CD14-positive monocyte (primary cell): ENCODE measurements at regions of chr11 and their contacts with region 1.

Region 1: GRCh38 chr11:83071567-83072349 is at the start of gene RAB30:
- DNase-seq: peak; percentile 97 to 99 (median 99)
- H3K4me3 ChIP-seq: peak within 1 kb of the TSS; percentile 47 to 85 (median 80)
- H3K4me3 Mint-ChIP-seq: no peak within 1 kb of the TSS
- H3K27ac ChIP-seq: peak within 1 kb of the TSS; percentile 79 to 92
- H3K27ac Mint-ChIP-seq: no peak within 1 kb of the TSS
- H3K4me1 ChIP-seq: peaks cover 21 to 34% of the 10 kb centered on the region in 2 donors
- H3K4me1 Mint-ChIP-seq: peaks cover 3% of the 10 kb centered on the region
- H3K27me3 ChIP-seq: peaks cover 29 to 35% of the 10 kb centered on the region in 2 donors
- H3K27me3 Mint-ChIP-seq: peaks cover 0 to 11% (median 0%) of the 10 kb centered on the region in 3 donors
- CTCF ChIP-seq: no peak
- polyA plus RNA-seq, gene RAB30: 0.11 to 0.67 (median 0.54) TPM

Region 2: DNA sequence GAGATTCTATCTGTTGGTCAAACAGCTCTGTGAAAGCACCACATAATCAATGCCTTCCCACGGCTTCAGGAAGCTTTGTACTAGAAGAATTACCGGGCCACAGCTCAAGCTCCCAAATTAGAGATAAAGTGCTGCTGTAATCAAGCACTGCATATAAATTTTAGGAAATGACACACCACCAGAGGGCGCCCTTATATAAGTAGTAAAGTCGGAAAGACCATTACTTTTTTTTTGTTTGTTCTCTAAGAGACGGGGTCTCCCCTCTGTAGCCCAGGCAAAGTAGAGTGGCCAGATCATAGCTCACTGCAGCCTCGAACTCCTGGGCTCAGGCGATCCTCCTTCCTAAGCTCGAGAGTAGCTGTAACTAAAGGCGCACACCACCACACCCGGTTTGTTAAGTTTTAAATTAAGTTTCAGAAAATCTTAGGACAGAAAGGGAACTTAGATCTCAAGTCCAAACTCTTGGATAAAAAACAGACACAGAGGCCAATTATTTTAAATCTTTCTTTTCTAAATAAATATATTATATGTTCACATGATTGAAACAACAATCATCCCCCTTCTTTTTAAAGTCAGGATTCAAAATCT is 204.2 kb before region 1 on chr11:
- intact Hi-C with region 1: loop called in 1 of 2 experiments (anchors 10 kb)
- DNase-seq: peak; percentile 68 to 86 (median 78)
- H3K4me3 ChIP-seq: peak overlapping the region; percentile 25 to 80 (median 71)
- H3K4me3 Mint-ChIP-seq: peak overlapping the region; percentile 78 to 90
- H3K27ac ChIP-seq: peak overlapping the region in 1 of 2 donors; percentile 73
- H3K27ac Mint-ChIP-seq: peak overlapping the region; percentile 57 to 94 (median 82)
- H3K4me1 ChIP-seq: peaks cover 26 to 35% of the 10 kb centered on the region in 2 donors
- H3K4me1 Mint-ChIP-seq: peaks cover 36% of the 10 kb centered on the region
- H3K27me3 ChIP-seq: no peaks in the 10 kb centered on the region
- H3K27me3 Mint-ChIP-seq: no peaks in the 10 kb centered on the region
- CTCF ChIP-seq: peak; percentile 86

Region 3: DNA sequence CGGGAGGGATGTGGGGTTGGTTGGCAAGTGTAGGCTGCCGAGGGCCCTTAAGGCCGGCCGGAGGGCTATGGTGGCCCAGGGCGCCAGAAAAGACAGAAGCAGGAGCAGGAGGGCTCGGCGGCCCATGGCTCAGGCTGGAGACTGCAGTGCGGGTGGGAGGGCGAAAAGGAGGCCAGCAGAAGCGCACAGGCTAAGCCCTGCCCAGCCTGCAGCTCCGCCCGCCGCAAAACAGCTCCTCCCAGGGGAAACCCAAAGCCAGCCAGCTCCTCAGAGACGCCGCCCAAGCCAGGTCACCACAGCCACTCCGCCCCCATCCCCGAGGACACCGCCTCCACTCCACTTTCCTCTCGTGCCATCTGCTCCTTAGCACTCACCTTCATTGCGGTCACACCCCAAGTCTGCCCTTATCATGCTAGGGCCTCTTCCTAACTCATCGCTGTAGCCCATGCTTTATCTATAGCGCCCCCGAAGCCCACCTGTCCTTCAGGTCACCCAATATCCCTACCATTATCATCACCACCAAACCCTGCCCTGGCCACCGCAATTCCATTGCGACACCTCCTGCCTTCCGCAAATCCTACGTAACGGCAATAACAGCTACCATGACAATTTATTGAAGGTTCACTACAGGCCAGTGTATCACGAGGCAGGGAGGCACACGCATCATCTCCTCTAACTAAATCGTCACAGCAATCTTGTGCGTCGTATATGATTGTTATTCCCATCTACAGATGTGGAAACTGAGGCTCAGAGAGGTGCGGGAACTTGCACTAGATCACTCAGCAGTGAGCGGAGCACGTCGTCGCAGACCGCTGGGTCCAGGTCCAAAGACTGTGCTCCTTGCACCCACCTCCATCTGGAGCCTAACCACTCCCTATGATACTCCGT is 171.2 kb before region 1 on chr11 and contains the start of gene PRCP:
- intact Hi-C with region 1: loop called in 1 of 2 experiments (anchors 10 kb)
- DNase-seq: peak; percentile 89 to 98 (median 96)
- H3K4me3 ChIP-seq: peak within 1 kb of the TSS; percentile 76 to 89 (median 78)
- H3K4me3 Mint-ChIP-seq: peak within 1 kb of the TSS; percentile 99 to 100
- H3K27ac ChIP-seq: peak within 1 kb of the TSS; percentile 99
- H3K27ac Mint-ChIP-seq: peak within 1 kb of the TSS; percentile 100
- H3K4me1 ChIP-seq: peaks cover 57 to 62% of the 10 kb centered on the region in 2 donors
- H3K4me1 Mint-ChIP-seq: peaks cover 49% of the 10 kb centered on the region
- H3K27me3 ChIP-seq: no peaks in the 10 kb centered on the region
- H3K27me3 Mint-ChIP-seq: peaks cover 0 to 2% (median 0%) of the 10 kb centered on the region in 3 donors
- CTCF ChIP-seq: no peak
- polyA plus RNA-seq, gene PRCP: 68.0 to 228 (median 186) TPM

Region 4: GRCh38 chr11:83025267-83025720 is 46.5 kb before region 1 on chr11:
- intact Hi-C with region 1: no loop called
- DNase-seq: no peak
- H3K4me3 ChIP-seq: no peak overlapping the region
- H3K4me3 Mint-ChIP-seq: no peak overlapping the region
- H3K27ac ChIP-seq: no peak overlapping the region
- H3K27ac Mint-ChIP-seq: no peak overlapping the region
- H3K4me1 ChIP-seq: no peaks in the 10 kb centered on the region
- H3K4me1 Mint-ChIP-seq: no peaks in the 10 kb centered on the region
- H3K27me3 ChIP-seq: no peaks in the 10 kb centered on the region
- H3K27me3 Mint-ChIP-seq: peaks cover 0 to 2% (median 2%) of the 10 kb centered on the region in 3 donors
- CTCF ChIP-seq: no peak

Region 5: GRCh38 chr11:83156150-83156995 is 84.6 kb after region 1 on chr11:
- intact Hi-C with region 1: loop called (anchors 2 to 5 kb)
- DNase-seq: peak; percentile 100
- H3K4me3 ChIP-seq: peak overlapping the region; percentile 77 to 98 (median 91)
- H3K4me3 Mint-ChIP-seq: peak overlapping the region; percentile 98 to 99
- H3K27ac ChIP-seq: peak overlapping the region; percentile 95 to 97
- H3K27ac Mint-ChIP-seq: peak overlapping the region; percentile 90 to 100 (median 100)
- H3K4me1 ChIP-seq: peaks cover 25 to 40% of the 10 kb centered on the region in 2 donors
- H3K4me1 Mint-ChIP-seq: peaks cover 24% of the 10 kb centered on the region
- H3K27me3 ChIP-seq: no peaks in the 10 kb centered on the region
- H3K27me3 Mint-ChIP-seq: peaks cover 0 to 4% (median 0%) of the 10 kb centered on the region in 3 donors
- CTCF ChIP-seq: no peak

Region 6: DNA sequence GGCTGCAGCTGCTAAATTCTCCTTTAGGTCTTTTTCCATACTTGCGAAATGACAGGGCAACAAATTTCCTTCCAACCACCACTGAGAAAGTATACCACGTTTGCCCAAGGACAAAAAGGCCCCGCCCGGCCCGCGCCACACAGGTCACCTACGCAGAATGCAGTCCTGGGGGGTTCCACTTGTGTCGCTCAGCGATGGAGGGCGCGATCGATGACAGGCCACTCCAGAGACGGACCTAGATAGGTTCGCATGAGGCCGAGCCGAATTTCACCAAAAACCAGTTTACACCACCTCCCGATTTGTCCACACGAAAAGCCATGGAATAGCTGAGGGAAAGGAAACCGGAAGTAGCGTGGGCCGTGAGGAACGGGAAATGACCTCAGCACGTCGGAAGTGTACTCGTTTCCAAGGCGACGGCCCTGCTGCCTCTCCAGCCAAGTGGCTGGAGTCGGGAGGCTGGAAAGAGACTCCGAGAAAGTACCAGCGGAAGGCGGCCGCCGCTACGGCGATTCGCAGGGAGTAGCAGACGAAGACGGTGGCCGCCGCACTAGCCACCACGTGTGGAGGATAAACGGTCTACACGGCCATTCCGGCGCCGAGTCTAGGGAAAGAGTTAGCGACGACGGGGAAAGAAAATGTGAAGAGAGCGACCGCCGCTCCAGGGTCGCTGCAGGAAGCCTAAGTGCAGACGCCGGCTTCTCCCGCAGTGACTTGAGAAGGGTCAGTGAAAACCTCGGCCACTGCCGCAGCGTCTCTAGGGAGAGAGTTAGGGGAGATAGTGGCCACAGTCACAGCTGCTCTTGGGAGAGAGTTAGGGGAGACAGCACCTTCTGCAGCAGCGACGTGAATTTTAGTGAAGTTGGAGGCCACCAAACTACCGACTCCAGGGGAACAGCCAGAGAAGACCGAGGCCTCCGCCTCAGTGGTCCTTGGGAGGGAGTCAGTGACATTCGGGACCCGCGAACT is 121.8 kb after region 1 on chr11 and contains the start of gene ANKRD42:
- intact Hi-C with region 1: loop called in 1 of 2 experiments (anchors 10 kb)
- DNase-seq: peak; percentile 90 to 96 (median 96)
- H3K4me3 ChIP-seq: peak within 1 kb of the TSS; percentile 82 to 99 (median 85)
- H3K4me3 Mint-ChIP-seq: peak within 1 kb of the TSS; percentile 97 to 99
- H3K27ac ChIP-seq: peak within 1 kb of the TSS; percentile 93 to 96
- H3K27ac Mint-ChIP-seq: peak within 1 kb of the TSS; percentile 97 to 100 (median 99)
- H3K4me1 ChIP-seq: peaks cover 23 to 27% of the 10 kb centered on the region in 2 donors
- H3K4me1 Mint-ChIP-seq: peaks cover 31% of the 10 kb centered on the region
- H3K27me3 ChIP-seq: no peaks in the 10 kb centered on the region
- H3K27me3 Mint-ChIP-seq: no peaks in the 10 kb centered on the region
- CTCF ChIP-seq: no peak
- polyA plus RNA-seq, gene ANKRD42: 4.3 to 6.2 (median 6.1) TPM

Region 7: GRCh38 chr11:83285771-83286528 is 214.2 kb after region 1 on chr11 and contains the start of gene CCDC90B:
- intact Hi-C with region 1: loop called (anchors 2 to 5 kb)
- DNase-seq: peak; percentile 94 to 96 (median 96)
- H3K4me3 ChIP-seq: peak within 1 kb of the TSS; percentile 76 to 95 (median 93)
- H3K4me3 Mint-ChIP-seq: peak within 1 kb of the TSS; percentile 93 to 96
- H3K27ac ChIP-seq: peak within 1 kb of the TSS; percentile 86 to 97
- H3K27ac Mint-ChIP-seq: peak within 1 kb of the TSS; percentile 96 to 100 (median 100)
- H3K4me1 ChIP-seq: peaks cover 23 to 26% of the 10 kb centered on the region in 2 donors
- H3K4me1 Mint-ChIP-seq: peaks cover 31% of the 10 kb centered on the region
- H3K27me3 ChIP-seq: no peaks in the 10 kb centered on the region
- H3K27me3 Mint-ChIP-seq: peaks cover 0 to 4% (median 2%) of the 10 kb centered on the region in 3 donors
- CTCF ChIP-seq: no peak
- polyA plus RNA-seq, gene CCDC90B: 15.3 to 46.2 (median 39.6) TPM